B cell (primary cell): ENCODE measurements at regions of chr21 and their contacts with region 1.

Region 1: DNA sequence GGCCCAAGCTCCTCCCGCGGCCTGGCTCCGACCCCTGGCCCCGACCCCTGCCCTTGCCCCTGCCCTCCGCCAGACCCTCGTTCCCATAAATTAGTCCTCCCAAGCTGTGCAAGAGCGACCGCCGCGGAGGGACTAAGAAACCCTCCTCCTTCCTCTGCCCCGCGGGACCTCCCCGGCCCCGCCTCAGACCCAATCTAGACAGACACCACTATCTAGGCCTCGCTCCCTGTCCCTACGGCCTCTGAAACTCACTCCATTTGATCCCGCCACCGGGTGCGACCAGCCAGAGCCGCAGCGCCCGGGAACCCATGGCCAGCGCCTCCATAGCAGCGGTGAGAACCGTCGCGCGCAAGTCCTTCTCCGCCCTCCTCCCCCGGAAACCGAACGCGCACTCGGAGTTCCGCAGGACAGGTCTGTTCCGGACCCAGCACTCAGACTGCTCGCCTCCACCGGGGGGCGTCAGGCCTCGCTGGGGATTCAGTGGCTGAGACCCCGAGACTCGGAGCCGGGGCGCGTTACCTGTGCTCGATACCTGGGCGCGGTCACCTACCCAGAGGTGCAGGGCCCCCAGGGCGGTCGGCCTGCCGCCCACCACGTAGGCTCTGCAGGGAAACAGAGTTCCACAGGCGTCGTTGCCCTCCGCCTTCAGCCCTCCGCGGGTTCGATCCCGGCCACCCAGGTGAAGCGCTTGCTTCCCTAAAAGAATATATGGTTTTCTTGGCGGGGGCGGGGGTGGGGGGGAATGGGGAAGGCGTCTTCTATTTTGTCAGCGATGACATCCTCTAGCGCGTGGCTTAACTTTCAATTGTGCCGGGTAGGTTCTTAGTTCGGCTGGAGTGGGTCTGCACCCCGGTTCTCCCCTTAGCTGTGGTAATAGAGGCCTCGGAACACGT is at the start of gene MRPL39:
- DNase-seq: peak; percentile 91
- ATAC-seq: peak; percentile 89
- H3K4me3 ChIP-seq: peak within 1 kb of the TSS; percentile 71 to 91 (median 89)
- H3K4me3 Mint-ChIP-seq: peak within 1 kb of the TSS; percentile 99
- H3K27ac ChIP-seq: peak within 1 kb of the TSS; percentile 72 to 89
- H3K27ac Mint-ChIP-seq: peak within 1 kb of the TSS; percentile 99
- H3K4me1 ChIP-seq: peaks cover 28 to 30% of the 10 kb centered on the region in 2 donors
- H3K4me1 Mint-ChIP-seq: peaks cover 38% of the 10 kb centered on the region
- H3K27me3 ChIP-seq: no peaks in the 10 kb centered on the region
- H3K27me3 Mint-ChIP-seq: no peaks in the 10 kb centered on the region
- CTCF ChIP-seq: no peak
- total RNA-seq, gene MRPL39: 18.1 and 19.7 TPM in 2 replicates

Region 2: GRCh38 chr21:25421327-25422028 is 185.9 kb before region 1 on chr21:
- CTCF ChIA-PET with region 1: interaction called, 48 read pairs
- POLR2A ChIA-PET with region 1: no interaction called
- intact Hi-C with region 1: loop called (anchors 1 kb)
- DNase-seq: peak; percentile 86
- ATAC-seq: peak; percentile 80
- H3K4me3 ChIP-seq: peak overlapping the region in 2 of 5 experiments; percentile 6 to 48
- H3K4me3 Mint-ChIP-seq: peak overlapping the region; percentile 75
- H3K27ac ChIP-seq: peak overlapping the region; percentile 86 to 92
- H3K27ac Mint-ChIP-seq: peak overlapping the region; percentile 90
- H3K4me1 ChIP-seq: peaks cover 31 to 47% of the 10 kb centered on the region in 2 donors
- H3K4me1 Mint-ChIP-seq: peaks cover 46% of the 10 kb centered on the region
- H3K27me3 ChIP-seq: no peaks in the 10 kb centered on the region
- H3K27me3 Mint-ChIP-seq: no peaks in the 10 kb centered on the region
- CTCF ChIP-seq: peak; percentile 85

Region 3: DNA sequence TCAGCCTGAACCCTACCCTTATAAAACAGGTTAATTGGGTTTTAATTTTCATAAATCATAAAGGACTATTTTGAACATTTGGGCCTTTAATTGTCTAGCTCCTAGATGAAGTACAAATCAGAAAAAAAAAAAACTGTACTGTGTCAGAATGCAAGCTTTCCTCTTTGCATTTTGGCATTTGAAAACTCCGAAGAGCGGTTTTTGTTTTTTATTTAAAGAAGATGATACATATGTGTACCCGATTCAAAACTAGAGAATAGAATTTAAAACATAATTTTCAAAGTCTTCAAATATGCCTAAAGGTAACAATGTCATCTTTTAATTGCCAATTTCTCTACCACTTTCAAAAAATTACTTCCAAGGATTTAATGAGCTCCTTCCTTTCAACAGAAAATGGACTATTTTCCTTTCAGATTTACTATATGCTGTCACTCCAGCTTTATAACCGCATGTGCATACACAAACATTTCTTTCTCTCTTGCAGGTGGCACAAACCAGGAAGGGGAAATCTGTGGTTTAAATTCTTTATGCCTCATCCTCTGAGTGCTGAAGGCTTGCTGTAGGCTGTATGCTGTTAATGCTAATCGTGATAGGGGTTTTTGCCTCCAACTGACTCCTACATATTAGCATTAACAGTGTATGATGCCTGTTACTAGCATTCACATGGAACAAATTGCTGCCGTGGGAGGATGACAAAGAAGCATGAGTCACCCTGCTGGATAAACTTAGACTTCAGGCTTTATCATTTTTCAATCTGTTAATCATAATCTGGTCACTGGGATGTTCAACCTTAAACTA is 33.8 kb before region 1 on chr21:
- CTCF ChIA-PET with region 1: interaction called, 4 read pairs
- POLR2A ChIA-PET with region 1: interaction called, 5 read pairs
- intact Hi-C with region 1: loop called (anchors 1 kb)
- DNase-seq: peak; percentile 76
- ATAC-seq: peak; percentile 69
- H3K4me3 ChIP-seq: peak overlapping the region; percentile 1 to 44 (median 25)
- H3K4me3 Mint-ChIP-seq: peak overlapping the region; percentile 66
- H3K27ac ChIP-seq: peak overlapping the region; percentile 73 to 87
- H3K27ac Mint-ChIP-seq: peak overlapping the region; percentile 85
- H3K4me1 ChIP-seq: peaks cover 27 to 30% of the 10 kb centered on the region in 2 donors
- H3K4me1 Mint-ChIP-seq: peaks cover 74% of the 10 kb centered on the region
- H3K27me3 ChIP-seq: no peaks in the 10 kb centered on the region
- H3K27me3 Mint-ChIP-seq: no peaks in the 10 kb centered on the region
- CTCF ChIP-seq: no peak

Region 4: DNA sequence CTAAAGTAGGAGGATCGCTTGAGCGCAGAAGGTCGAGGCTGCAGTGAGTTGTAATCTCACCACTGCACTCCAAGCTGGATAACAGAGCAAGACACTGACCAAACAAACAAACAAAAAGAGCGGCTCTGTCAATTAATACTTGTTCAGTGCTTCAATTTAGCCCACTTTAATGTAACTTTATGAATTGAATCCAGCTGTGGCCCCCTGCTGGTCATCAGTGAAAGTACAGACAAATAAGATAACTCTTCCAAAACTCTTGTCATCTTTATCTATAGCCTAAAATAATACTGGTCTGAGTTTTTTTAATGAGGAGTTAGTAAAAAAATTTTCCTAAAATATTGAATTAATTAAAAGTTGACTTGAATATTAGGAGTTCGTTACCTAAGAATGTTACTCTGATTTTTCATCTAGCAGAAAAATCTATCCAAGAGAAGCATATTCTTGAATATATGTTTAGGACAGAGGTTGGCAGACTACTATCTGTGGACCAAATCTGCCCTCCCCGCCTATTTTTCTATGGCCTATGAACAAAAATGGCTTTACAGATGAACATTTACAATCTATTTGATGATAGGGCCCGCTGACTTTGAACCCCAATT is 101.2 kb after region 1 on chr21:
- CTCF ChIA-PET with region 1: interaction called, 71 read pairs
- POLR2A ChIA-PET with region 1: interaction called, 3 read pairs
- intact Hi-C with region 1: loop called (anchors 1 kb)
- DNase-seq: peak; percentile 72
- ATAC-seq: peak; percentile 36
- H3K4me3 ChIP-seq: no peak overlapping the region
- H3K4me3 Mint-ChIP-seq: no peak overlapping the region
- H3K27ac ChIP-seq: no peak overlapping the region
- H3K27ac Mint-ChIP-seq: no peak overlapping the region
- H3K4me1 ChIP-seq: no peaks in the 10 kb centered on the region
- H3K4me1 Mint-ChIP-seq: no peaks in the 10 kb centered on the region
- H3K27me3 ChIP-seq: no peaks in the 10 kb centered on the region
- H3K27me3 Mint-ChIP-seq: no peaks in the 10 kb centered on the region
- CTCF ChIP-seq: peak; percentile 98

Region 5: DNA sequence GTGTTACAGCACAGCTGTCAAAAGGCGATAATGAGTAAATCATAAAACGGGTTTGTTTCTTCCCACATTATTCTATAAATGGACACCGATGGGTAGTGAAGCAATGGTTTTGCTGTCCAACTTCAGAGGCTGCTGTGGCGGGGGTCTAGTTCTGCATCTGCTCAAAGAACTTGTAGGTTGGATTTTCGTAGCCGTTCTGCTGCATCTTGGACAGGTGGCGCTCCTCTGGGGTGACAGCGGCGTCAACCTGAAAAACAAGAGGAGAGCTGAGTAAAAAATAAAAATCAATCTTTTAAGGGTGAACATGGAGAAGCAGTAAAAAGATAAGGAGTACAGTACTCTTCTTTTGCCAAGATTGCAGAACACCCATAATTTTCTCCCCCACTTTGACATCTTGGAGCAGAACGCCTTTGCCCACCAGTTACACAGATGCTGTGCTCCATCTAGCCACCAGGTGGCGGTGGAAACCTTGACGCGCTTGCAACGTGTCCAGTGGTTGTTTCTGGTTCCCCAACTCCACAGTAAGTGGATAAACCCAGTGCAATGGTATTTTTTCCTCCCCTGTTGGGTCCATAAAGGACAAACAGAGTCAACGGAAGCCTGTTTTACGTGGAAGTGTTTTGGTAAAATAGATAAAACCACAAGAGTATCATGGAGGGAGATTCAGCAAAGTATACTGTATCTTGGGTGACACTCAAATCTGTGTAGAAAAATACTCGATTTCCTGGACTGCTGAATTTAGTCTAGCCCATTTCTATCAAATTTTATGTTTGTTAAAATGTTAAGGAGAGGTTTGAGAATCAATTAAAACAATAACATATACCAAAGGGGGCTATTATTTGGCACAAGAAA is 274.4 kb after region 1 on chr21:
- CTCF ChIA-PET with region 1: no interaction called
- POLR2A ChIA-PET with region 1: no interaction called
- intact Hi-C with region 1: loop called (anchors 5 kb)
- DNase-seq: peak; percentile 69
- ATAC-seq: peak; percentile 86
- H3K4me3 ChIP-seq: no peak overlapping the region
- H3K4me3 Mint-ChIP-seq: no peak overlapping the region
- H3K27ac ChIP-seq: no peak overlapping the region
- H3K27ac Mint-ChIP-seq: no peak overlapping the region
- H3K4me1 ChIP-seq: no peaks in the 10 kb centered on the region
- H3K4me1 Mint-ChIP-seq: no peaks in the 10 kb centered on the region
- H3K27me3 ChIP-seq: no peaks in the 10 kb centered on the region
- H3K27me3 Mint-ChIP-seq: no peaks in the 10 kb centered on the region
- CTCF ChIP-seq: peak; percentile 99

Region 6: GRCh38 chr21:26366781-26367180 is 759.4 kb after region 1 on chr21:
- CTCF ChIA-PET with region 1: no interaction called
- POLR2A ChIA-PET with region 1: no interaction called
- intact Hi-C with region 1: no loop called
- DNase-seq: no peak
- ATAC-seq: no peak
- H3K4me3 ChIP-seq: no peak overlapping the region
- H3K4me3 Mint-ChIP-seq: no peak overlapping the region
- H3K27ac ChIP-seq: no peak overlapping the region
- H3K27ac Mint-ChIP-seq: no peak overlapping the region
- H3K4me1 ChIP-seq: no peaks in the 10 kb centered on the region
- H3K4me1 Mint-ChIP-seq: no peaks in the 10 kb centered on the region
- H3K27me3 ChIP-seq: no peaks in the 10 kb centered on the region
- H3K27me3 Mint-ChIP-seq: no peaks in the 10 kb centered on the region
- CTCF ChIP-seq: no peak

Region 7: DNA sequence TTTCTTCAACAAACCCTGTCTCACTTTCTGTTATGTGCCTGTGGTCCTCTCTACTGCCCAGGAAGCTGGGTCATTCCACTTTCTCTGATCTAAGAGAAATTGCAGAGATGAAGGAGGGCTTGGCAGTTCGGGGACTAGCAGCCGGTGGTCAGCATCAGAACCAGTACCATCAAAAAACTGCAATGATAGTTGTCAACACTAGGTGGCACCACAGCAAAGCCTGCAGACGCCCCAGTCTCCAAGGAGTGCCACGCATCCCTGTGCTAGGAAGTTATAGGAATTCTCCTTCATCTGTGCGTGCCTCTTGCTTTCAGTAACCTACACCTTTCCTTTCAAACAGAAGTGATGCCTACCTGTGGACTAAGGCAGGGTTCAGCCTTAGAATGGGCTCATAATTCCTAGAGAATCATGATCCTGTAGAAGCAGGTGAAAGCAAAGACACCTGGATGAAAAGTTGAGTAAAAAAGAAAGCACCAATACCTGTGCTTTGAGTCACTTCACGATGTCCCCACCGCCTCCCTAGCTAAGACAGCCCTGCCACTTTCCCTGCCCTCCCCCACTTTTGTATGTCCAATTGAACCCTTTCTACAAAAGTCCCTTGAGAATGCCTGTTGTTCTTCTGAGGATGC is 1108.6 kb after region 1 on chr21:
- CTCF ChIA-PET with region 1: interaction called, 18 read pairs
- POLR2A ChIA-PET with region 1: no interaction called
- intact Hi-C with region 1: no loop called
- DNase-seq: peak; percentile 29
- ATAC-seq: no peak
- H3K4me3 ChIP-seq: no peak overlapping the region
- H3K4me3 Mint-ChIP-seq: no peak overlapping the region
- H3K27ac ChIP-seq: no peak overlapping the region
- H3K27ac Mint-ChIP-seq: no peak overlapping the region
- H3K4me1 ChIP-seq: no peaks in the 10 kb centered on the region
- H3K4me1 Mint-ChIP-seq: no peaks in the 10 kb centered on the region
- H3K27me3 ChIP-seq: no peaks in the 10 kb centered on the region
- H3K27me3 Mint-ChIP-seq: peaks cover 12% of the 10 kb centered on the region
- CTCF ChIP-seq: peak; percentile 68